PC-9 (cell line): ENCODE measurements at regions of chr1 and their contacts with region 1.

Region 1: DNA sequence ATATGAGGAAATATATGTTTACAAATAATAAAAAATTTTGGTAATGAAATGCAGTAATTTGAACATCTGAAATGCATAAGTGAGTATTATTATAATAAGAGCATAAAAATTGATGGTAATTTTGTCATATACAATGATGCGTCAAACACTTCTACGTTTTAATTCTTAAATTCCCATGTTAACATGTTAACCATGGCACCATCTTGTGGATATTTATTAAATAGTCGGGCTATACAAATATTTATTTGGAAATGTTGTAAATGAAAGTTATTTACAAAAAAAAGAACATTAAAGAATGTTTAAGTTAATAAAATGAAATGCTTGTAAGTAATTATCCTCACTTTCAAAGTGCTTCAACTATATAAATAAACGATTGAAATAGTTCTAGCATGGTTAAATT is 57.2 kb upstream of the C1orf185 start:
- DNase-seq: no peak
- H3K4me3 ChIP-seq: no peak overlapping the region
- H3K27ac ChIP-seq: no peak overlapping the region
- H3K4me1 ChIP-seq: no peaks in the 10 kb centered on the region
- H3K27me3 ChIP-seq: no peaks in the 10 kb centered on the region
- CTCF ChIP-seq: peak; percentile 55; the same call in 1 of the 2 replicates

Region 2: DNA sequence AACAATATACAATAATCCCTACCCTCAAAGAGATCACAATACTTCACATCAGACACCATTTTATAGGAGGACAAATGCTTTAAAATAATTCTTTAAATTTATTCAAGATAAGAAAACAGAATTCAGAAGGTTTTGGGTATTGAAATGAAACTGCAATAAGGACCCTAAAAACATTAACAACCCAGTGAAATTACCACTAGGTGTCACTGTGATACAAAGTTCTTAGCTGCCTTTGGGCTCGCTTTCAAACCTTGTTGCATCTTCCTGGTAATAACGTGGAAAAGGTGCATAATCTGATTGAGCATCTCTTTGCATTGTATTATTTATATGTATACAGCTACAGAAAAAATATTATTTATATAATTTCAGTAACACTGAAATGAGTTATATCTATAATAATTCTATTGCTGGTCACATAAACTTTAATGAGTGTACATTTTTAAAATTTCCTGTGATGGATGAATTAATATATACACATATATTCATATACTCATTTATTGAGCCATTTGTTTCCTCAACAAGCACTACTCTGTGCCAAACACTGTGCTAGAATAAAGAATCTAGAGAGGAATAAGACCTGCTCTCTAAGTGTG is 270.0 kb before region 1 on chr1:
- CTCF ChIA-PET with region 1: no interaction called
- POLR2A ChIA-PET with region 1: no interaction called
- intact Hi-C with region 1: loop called (anchors 10 kb)
- DNase-seq: no peak
- H3K4me3 ChIP-seq: no peak overlapping the region
- H3K27ac ChIP-seq: no peak overlapping the region
- H3K4me1 ChIP-seq: no peaks in the 10 kb centered on the region
- H3K27me3 ChIP-seq: no peaks in the 10 kb centered on the region
- CTCF ChIP-seq: peak; percentile 83

Region 3: DNA sequence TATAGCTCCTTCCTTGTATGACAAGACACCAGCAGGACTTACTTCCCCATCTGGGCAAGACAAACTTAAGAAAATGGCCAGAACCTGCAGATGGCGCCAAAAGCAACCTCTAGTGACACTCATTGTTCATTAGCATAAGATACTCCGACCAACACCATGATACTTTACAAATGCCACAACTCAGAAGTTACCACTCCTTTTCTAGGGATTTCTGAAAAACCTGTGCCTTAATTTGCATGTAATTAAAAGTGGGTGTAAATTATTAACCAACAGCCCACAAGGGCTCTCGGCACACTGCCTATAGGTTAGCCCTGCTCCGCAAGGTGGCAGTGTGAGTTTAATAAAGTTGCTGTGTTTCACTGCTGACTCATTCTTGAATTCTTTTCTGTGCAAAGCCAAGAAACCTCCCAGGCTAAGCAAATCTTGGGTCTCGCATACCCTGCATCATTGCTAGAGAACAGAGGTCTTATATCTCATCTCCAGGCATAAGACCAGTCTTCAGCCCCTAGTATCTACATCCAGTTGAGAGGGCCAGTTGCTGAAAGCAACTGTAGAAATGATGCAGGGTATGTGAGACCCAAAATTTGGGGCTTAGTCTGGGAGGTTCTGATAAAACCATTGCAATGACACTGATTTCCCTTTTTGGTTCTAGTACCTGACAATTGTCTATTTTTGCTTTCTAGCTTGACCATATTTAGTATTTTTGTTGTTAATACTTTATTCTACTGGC is 171.2 kb before region 1 on chr1:
- CTCF ChIA-PET with region 1: no interaction called
- POLR2A ChIA-PET with region 1: no interaction called
- intact Hi-C with region 1: loop called (anchors 1 kb)
- DNase-seq: peak; percentile 49 to 63
- H3K4me3 ChIP-seq: no peak overlapping the region
- H3K27ac ChIP-seq: no peak overlapping the region
- H3K4me1 ChIP-seq: no peaks in the 10 kb centered on the region
- H3K27me3 ChIP-seq: no peaks in the 10 kb centered on the region
- CTCF ChIP-seq: peak; percentile 61; the same call in 1 of the 2 replicates

Region 4: GRCh38 chr1:50917138-50918137 is 127.4 kb before region 1 on chr1:
- CTCF ChIA-PET with region 1: interaction called, 10 read pairs
- POLR2A ChIA-PET with region 1: no interaction called
- intact Hi-C with region 1: no loop called
- DNase-seq: no peak
- H3K4me3 ChIP-seq: no peak overlapping the region
- H3K27ac ChIP-seq: no peak overlapping the region
- H3K4me1 ChIP-seq: no peaks in the 10 kb centered on the region
- H3K27me3 ChIP-seq: no peaks in the 10 kb centered on the region
- CTCF ChIP-seq: no peak

Region 5: GRCh38 chr1:50929376-50929958 is 115.4 kb before region 1 on chr1:
- CTCF ChIA-PET with region 1: interaction called, 9 read pairs
- POLR2A ChIA-PET with region 1: no interaction called
- intact Hi-C with region 1: loop called (anchors 5 kb)
- DNase-seq: no peak
- H3K4me3 ChIP-seq: no peak overlapping the region
- H3K27ac ChIP-seq: peak overlapping the region; percentile 29; the same call in 1 of the 2 replicates
- H3K4me1 ChIP-seq: no peaks in the 10 kb centered on the region
- H3K27me3 ChIP-seq: no peaks in the 10 kb centered on the region
- CTCF ChIP-seq: peak; percentile 77